Left colon (tissue), 2 donors: ENCODE measurements at regions of chr1 and their contacts with region 1.

Region 1: GRCh38 chr1:110990536-110990935 is 26.8 kb upstream of the LRIF1 start:
- DNase-seq: no peak
- ATAC-seq: no peak

Region 2: GRCh38 chr1:110218739-110219138 is 771.8 kb before region 1 on chr1:
- intact Hi-C with region 1: no loop called
- DNase-seq: no peak
- ATAC-seq: no peak

Region 3: GRCh38 chr1:110783292-110783918 is 207.1 kb before region 1 on chr1:
- intact Hi-C with region 1: no loop called
- DNase-seq: peak in 1 of 2 donors; percentile 25
- ATAC-seq: peak; percentile 60

Region 4: GRCh38 chr1:110936567-110936966 is 54.0 kb before region 1 on chr1:
- intact Hi-C with region 1: loop called in 1 of 2 experiments (anchors 10 kb)
- DNase-seq: no peak
- ATAC-seq: no peak